ENCODE measurements at regions of chr5 and their contacts with region 1.

Region 1: DNA sequence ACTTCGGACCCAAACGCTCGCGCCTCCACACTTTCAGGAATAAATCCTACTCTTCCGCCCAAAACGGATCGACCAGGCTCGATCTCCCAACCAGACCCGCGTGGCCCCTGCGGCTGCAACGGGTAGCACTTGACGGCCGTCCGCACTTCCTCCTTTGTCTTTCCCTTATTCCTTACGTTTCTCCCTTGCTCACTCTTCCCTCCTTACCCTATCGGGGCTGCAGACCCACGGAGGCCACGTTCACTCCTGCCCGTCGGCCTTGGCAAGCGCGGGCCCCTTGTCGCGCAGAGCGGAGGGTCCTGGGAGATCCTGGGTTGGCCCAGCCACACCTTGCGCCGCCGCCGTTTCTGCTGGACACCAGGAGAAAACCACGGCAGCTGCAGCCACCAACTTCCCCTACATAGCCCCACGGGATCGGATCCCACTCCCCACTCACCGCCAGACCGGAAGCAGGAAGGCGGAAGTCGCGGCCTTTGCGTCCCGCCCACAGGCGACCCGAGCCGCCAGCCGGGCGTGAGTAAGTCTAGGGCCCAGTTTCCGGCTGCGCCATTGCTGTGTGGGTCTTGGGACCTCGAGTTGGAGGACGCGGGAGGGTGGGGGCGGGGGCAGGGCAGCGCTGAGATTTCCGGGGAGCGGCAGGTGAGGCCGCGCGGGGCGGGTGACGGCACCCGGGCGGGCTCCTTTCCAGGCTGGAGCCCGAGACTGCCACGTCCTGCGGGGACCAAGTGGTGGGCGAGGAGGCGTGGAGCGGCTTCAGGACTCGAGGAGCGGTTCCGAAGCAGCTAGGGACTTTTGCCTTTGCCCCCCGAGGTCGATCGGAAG is at the start of gene SMIM15:
- DNase-seq: peak; percentile 93
- H3K4me3 ChIP-seq: peak within 1 kb of the TSS; percentile 98
- H3K27ac ChIP-seq: peak within 1 kb of the TSS; percentile 95
- H3K4me1 ChIP-seq: peaks cover 26% of the 10 kb centered on the region
- H3K27me3 ChIP-seq: no peaks in the 10 kb centered on the region
- CTCF ChIP-seq: no peak
- total RNA-seq, gene SMIM15: 78.7 and 93.5 TPM in 2 replicates

Region 2: DNA sequence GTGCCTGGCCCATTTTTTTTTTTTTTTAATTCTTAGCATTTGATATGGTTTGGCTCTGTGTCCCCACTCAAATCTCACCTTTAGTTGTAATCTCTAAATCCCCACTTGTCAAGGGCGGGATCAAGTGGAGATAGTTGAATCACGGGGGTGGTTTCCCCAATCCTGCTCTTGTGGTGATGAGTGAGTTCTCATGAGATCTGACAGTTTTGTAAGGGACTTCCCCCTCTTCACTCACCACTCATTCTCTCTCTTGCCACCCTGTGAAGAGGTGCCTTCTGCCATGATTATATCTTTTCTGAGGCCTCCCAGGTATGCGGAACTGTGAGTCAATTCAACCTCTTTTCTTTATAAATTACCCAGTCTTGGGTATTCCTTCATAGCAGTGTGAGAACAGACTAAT is 190.0 kb before region 1 on chr5:
- CTCF ChIA-PET with region 1: no interaction called
- POLR2A ChIA-PET with region 1: no interaction called
- intact Hi-C with region 1: no loop called
- DNase-seq: no peak
- H3K4me3 ChIP-seq: no peak overlapping the region
- H3K27ac ChIP-seq: no peak overlapping the region
- H3K4me1 ChIP-seq: no peaks in the 10 kb centered on the region
- H3K27me3 ChIP-seq: no peaks in the 10 kb centered on the region
- CTCF ChIP-seq: no peak

Region 3: GRCh38 chr5:61658592-61659008 is 496.4 kb after region 1 on chr5:
- CTCF ChIA-PET with region 1: no interaction called
- POLR2A ChIA-PET with region 1: no interaction called
- intact Hi-C with region 1: loop called (anchors 10 kb)
- DNase-seq: peak; percentile 86
- H3K4me3 ChIP-seq: no peak overlapping the region
- H3K27ac ChIP-seq: no peak overlapping the region
- H3K4me1 ChIP-seq: peaks cover 30% of the 10 kb centered on the region
- H3K27me3 ChIP-seq: no peaks in the 10 kb centered on the region
- CTCF ChIP-seq: peak; percentile 97

Region 4: DNA sequence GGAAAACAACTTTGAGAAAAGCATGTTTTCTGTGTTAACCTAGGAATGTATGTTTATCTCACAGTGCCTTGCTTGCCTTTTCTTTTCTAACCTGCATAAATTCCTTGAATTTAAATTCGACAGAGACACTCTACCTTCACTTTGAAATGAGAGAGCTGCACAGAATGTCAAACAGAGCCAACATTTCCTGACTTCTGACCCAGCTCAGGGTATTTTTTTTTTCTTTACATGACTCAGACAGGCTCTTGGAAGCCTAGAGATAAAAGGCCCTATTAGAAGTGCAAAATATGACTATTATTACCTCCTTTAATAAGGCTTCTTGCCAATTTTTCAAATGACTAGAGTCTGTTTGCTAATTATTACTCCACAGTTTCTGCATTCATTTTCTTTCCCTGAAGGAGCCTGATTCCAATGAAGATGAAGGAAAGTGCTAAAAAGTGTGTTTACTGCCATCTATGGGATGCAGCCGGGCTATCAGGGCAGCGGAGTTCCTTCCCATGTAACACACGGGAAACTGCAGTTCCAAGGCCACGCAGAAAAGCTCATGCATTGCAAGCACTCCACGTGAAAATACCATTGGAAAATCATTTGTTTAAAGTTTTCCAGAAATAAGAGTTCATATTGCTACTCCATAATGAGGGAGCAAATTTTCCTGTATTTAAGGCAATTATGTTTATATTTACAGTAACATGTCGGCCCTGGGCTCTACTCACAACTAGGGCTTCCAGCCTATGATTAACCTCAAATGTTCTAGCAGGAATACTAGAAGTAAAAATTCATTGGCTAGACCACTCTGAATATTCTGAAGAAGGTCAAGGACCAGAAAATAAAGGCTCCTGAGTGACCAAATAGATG is 655.5 kb after region 1 on chr5:
- CTCF ChIA-PET with region 1: no interaction called
- POLR2A ChIA-PET with region 1: no interaction called
- intact Hi-C with region 1: loop called (anchors 10 kb)
- DNase-seq: peak; percentile 84
- H3K4me3 ChIP-seq: no peak overlapping the region
- H3K27ac ChIP-seq: peak overlapping the region; percentile 62
- H3K4me1 ChIP-seq: peaks cover 33% of the 10 kb centered on the region
- H3K27me3 ChIP-seq: no peaks in the 10 kb centered on the region
- CTCF ChIP-seq: peak; percentile 85